BJ (cell line): ENCODE measurements at regions of chr19 and their contacts with region 1.

Region 1: GRCh38 chr19:53792721-53793433 is 31.2 kb downstream of the NLRP12 start:
- DNase-seq: peak; percentile 27
- H3K4me3 ChIP-seq: no peak overlapping the region
- H3K27me3 ChIP-seq: no peaks in the 10 kb centered on the region
- CTCF ChIP-seq: peak; percentile 99

Region 2: GRCh38 chr19:52237771-52238400 is 1555.0 kb before region 1 on chr19:
- CTCF ChIA-PET with region 1: no interaction called
- POLR2A ChIA-PET with region 1: no interaction called
- DNase-seq: peak; percentile 8
- H3K4me3 ChIP-seq: no peak overlapping the region
- H3K27me3 ChIP-seq: no peaks in the 10 kb centered on the region
- CTCF ChIP-seq: peak; percentile 90

Region 3: GRCh38 chr19:53772943-53773342 is 19.9 kb before region 1 on chr19:
- CTCF ChIA-PET with region 1: interaction called, 11 read pairs
- POLR2A ChIA-PET with region 1: no interaction called
- DNase-seq: peak; percentile 6
- H3K4me3 ChIP-seq: no peak overlapping the region
- H3K27me3 ChIP-seq: no peaks in the 10 kb centered on the region
- CTCF ChIP-seq: peak; percentile 67

Region 4: DNA sequence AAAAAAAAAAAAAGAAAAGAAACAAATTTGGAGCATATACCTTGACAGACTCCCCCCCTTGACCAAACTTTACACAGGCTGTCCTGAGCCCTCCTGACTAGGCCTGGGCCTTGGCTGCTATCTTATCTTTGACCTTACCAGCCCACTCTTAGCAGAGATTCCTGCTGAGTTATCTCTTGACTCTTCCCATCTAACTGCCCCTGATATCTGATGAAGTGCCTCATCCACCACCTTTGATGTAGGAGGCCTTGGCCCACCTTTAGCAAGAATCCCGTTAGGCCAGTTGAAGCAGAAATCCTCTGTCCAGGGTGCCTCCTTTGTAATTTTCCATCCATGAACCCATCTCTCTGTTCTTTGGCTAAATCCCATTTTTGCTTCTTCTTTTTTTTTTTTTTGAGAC is 12.4 kb before region 1 on chr19:
- CTCF ChIA-PET with region 1: interaction called, 10 read pairs
- POLR2A ChIA-PET with region 1: no interaction called
- DNase-seq: no peak
- H3K4me3 ChIP-seq: no peak overlapping the region
- H3K27me3 ChIP-seq: no peaks in the 10 kb centered on the region
- CTCF ChIP-seq: no peak

Region 5: DNA sequence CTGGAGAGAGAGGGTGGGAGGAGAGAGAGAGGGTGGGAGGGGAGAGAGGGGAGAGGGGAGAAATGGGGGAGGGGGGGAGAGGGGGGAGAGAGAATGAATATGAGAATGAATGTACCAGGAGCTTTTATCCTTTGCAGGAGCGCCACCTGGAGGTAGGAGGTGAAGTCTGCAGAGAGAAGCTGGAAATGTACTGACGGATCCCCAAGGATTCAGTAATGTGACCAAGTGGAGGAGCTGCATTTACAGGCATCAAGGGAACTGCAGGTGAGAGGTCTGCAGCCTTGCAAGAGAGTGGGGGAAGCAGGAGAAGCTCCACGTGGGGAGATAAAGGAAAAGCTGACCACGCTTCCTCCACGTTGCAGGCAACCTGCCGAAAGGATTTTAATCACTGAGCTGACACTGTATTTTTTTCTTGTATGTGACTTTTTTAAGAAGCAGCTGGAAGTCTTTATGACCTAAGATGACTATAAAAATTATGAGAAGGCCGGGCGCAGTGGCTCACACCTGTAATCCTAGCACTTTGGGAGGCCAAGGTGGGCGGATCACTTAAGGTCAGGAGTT is 237.1 kb after region 1 on chr19:
- CTCF ChIA-PET with region 1: interaction called, 85 read pairs
- POLR2A ChIA-PET with region 1: no interaction called
- DNase-seq: no peak
- H3K4me3 ChIP-seq: no peak overlapping the region
- H3K27me3 ChIP-seq: no peaks in the 10 kb centered on the region; the same call in 1 of the 2 replicates
- CTCF ChIP-seq: peak; percentile 77